Activated T-helper 1 cell treated with anti-CD3 and anti-CD28 coated beads, Interleukin-12 subunit alpha, Interleukin-12 subunit beta, Interleukin-2, Interleukin-4 antibody, amounts not matched to agents 30 ng/mL and 10 ng/mL and 1 ng/mL, durations not matched to agents 14 hours and 24 hours and 36 hours (primary cell): ENCODE measurements at regions of chr7 and their contacts with region 1.

Region 1: GRCh38 chr7:150322833-150323681 is at the starts of genes ACTR3C and LRRC61:
- DNase-seq: peak; percentile 64
- H3K4me3 Mint-ChIP-seq: peak within 1 kb of the TSS; percentile 97
- H3K27ac Mint-ChIP-seq: peak within 1 kb of the TSS; percentile 99
- H3K4me1 Mint-ChIP-seq: peaks cover 62% of the 10 kb centered on the region
- H3K27me3 Mint-ChIP-seq: no peaks in the 10 kb centered on the region
- total RNA-seq, gene ACTR3C: 8.2 and 9.8 TPM in 2 replicates
- total RNA-seq, gene LRRC61: 24.9 and 26.1 TPM in 2 replicates

Region 2: GRCh38 chr7:149624419-149625339 is 698.4 kb before region 1 on chr7:
- intact Hi-C with region 1: loop called (anchors 5 kb)
- DNase-seq: peak; percentile 91
- H3K4me3 Mint-ChIP-seq: peak overlapping the region; percentile 89
- H3K27ac Mint-ChIP-seq: peak overlapping the region; percentile 83
- H3K4me1 Mint-ChIP-seq: peaks cover 32% of the 10 kb centered on the region
- H3K27me3 Mint-ChIP-seq: peaks cover 6% of the 10 kb centered on the region

Region 3: GRCh38 chr7:150368096-150368883 is 45.2 kb after region 1 on chr7 and contains the start of gene REPIN1:
- intact Hi-C with region 1: loop called (anchors 1 kb)
- DNase-seq: peak; percentile 73
- H3K4me3 Mint-ChIP-seq: peak within 1 kb of the TSS; percentile 94
- H3K27ac Mint-ChIP-seq: peak within 1 kb of the TSS; percentile 98
- H3K4me1 Mint-ChIP-seq: peaks cover 50% of the 10 kb centered on the region
- H3K27me3 Mint-ChIP-seq: peaks cover 1% of the 10 kb centered on the region
- total RNA-seq, gene REPIN1: 67.2 and 67.4 TPM in 2 replicates

Region 4: GRCh38 chr7:150388709-150389531 is 65.9 kb after region 1 on chr7:
- intact Hi-C with region 1: no loop called
- DNase-seq: no peak
- H3K4me3 Mint-ChIP-seq: no peak overlapping the region
- H3K27ac Mint-ChIP-seq: no peak overlapping the region
- H3K4me1 Mint-ChIP-seq: no peaks in the 10 kb centered on the region
- H3K27me3 Mint-ChIP-seq: no peaks in the 10 kb centered on the region

Region 5: DNA sequence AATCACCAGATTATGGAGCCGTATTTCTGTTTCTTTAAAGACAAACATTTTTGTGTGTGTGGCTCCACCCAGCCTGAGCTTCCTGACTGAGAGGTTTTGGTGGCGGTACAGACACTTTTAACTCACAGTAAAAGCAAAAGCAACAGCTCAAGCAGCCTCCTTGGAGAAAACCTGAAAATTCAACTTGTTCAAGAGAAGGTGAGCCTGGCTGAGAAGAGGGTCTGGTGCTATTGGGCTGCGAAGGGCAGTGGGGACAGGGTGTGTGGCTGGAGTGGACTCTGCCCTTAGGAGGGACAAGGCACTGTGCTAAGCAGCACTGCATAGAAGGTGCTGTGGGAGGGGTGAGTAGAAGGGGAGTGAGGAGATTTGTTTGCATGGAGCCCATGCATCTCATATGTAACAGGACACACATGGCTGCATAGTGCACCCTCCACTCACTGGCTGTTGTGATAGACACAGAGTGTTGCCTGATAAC is 191.7 kb after region 1 on chr7 and contains the start of gene GIMAP7:
- intact Hi-C with region 1: loop called (anchors 2 kb)
- DNase-seq: peak; percentile 68
- H3K4me3 Mint-ChIP-seq: peak within 1 kb of the TSS; percentile 96
- H3K27ac Mint-ChIP-seq: peak within 1 kb of the TSS; percentile 98
- H3K4me1 Mint-ChIP-seq: peaks cover 65% of the 10 kb centered on the region
- H3K27me3 Mint-ChIP-seq: no peaks in the 10 kb centered on the region
- total RNA-seq, gene GIMAP7: 46.9 and 55.1 TPM in 2 replicates

Region 6: GRCh38 chr7:151017953-151018420 is 694.9 kb after region 1 on chr7:
- intact Hi-C with region 1: loop called (anchors 10 kb)
- DNase-seq: peak; percentile 73
- H3K4me3 Mint-ChIP-seq: peak overlapping the region; percentile 82
- H3K27ac Mint-ChIP-seq: peak overlapping the region; percentile 81
- H3K4me1 Mint-ChIP-seq: peaks cover 39% of the 10 kb centered on the region
- H3K27me3 Mint-ChIP-seq: peaks cover 19% of the 10 kb centered on the region

Region 7: DNA sequence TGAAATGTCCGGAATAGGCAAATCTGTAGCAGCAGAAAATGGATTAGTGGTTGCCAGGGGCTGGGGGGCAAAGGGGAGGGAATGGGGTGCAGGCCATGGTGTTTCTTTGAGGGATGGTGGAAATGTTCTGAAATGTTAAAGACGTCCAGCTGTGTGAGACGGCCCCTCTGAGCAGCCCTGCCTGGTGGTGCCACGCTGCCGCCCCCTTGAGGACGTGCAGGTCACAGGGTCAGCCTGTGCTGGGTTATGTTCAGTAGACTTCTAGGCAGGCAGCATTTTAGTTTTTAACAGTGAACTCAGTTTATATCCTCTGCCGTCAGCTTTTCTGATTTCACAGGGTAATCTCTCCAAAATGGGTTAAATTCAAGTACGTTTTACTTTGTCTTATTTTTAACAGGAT is 1028.0 kb after region 1 on chr7:
- intact Hi-C with region 1: loop called (anchors 2 kb)
- DNase-seq: no peak
- H3K4me3 Mint-ChIP-seq: peak overlapping the region; percentile 65
- H3K27ac Mint-ChIP-seq: peak overlapping the region; percentile 93
- H3K4me1 Mint-ChIP-seq: peaks cover 39% of the 10 kb centered on the region
- H3K27me3 Mint-ChIP-seq: no peaks in the 10 kb centered on the region